ENCODE measurements at regions of chr1 and their contacts with region 1.

Region 1: DNA sequence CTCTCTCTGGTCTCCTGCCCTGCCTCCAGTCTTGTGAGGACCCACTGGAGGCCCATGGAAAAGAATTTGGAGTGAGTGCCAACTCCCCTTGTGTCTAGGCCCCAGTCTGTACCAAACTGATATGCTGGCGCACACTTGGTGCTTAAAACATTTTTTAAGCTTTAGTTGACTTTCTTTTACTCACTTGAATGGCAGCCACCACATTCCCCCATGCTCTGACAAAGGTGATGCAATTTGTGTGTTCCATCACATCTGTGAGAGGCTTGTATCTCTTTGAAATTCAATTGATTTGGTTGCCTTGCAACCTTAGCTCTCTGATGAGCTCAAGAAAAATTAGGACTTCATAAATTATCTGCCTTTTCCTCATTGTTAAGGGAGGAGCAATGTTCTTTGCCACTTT is 30.5 kb upstream of the WDTC1 start:
- DNase-seq: no peak
- ATAC-seq: no peak
- H3K4me3 ChIP-seq: no peak overlapping the region
- H3K4me3 Mint-ChIP-seq: no peak overlapping the region
- H3K27ac ChIP-seq: no peak overlapping the region
- H3K27ac Mint-ChIP-seq: no peak overlapping the region
- H3K4me1 ChIP-seq: no peaks in the 10 kb centered on the region
- H3K4me1 Mint-ChIP-seq: no peaks in the 10 kb centered on the region
- H3K27me3 ChIP-seq: no peaks in the 10 kb centered on the region
- H3K27me3 Mint-ChIP-seq: no peaks in the 10 kb centered on the region
- CTCF ChIP-seq: no peak

Region 2: GRCh38 chr1:27161594-27161993 is 42.4 kb before region 1 on chr1:
- CTCF ChIA-PET with region 1: no interaction called
- POLR2A ChIA-PET with region 1: no interaction called
- intact Hi-C with region 1: no loop called
- DNase-seq: peak in 1 of 9 experiments; percentile 46
- ATAC-seq: peak; percentile 89
- H3K4me3 ChIP-seq: no peak overlapping the region
- H3K4me3 Mint-ChIP-seq: no peak overlapping the region
- H3K27ac ChIP-seq: no peak overlapping the region
- H3K27ac Mint-ChIP-seq: peak overlapping the region; percentile 58
- H3K4me1 ChIP-seq: peaks cover 11% of the 10 kb centered on the region
- H3K4me1 Mint-ChIP-seq: peaks cover 11% of the 10 kb centered on the region
- H3K27me3 ChIP-seq: no peaks in the 10 kb centered on the region
- H3K27me3 Mint-ChIP-seq: no peaks in the 10 kb centered on the region
- CTCF ChIP-seq: no peak

Region 3: GRCh38 chr1:27257155-27257554 is 53.2 kb after region 1 on chr1:
- CTCF ChIA-PET with region 1: interaction called, 13 read pairs
- POLR2A ChIA-PET with region 1: no interaction called
- intact Hi-C with region 1: no loop called
- DNase-seq: no peak
- ATAC-seq: no peak
- H3K4me3 ChIP-seq: no peak overlapping the region
- H3K4me3 Mint-ChIP-seq: no peak overlapping the region
- H3K27ac ChIP-seq: no peak overlapping the region
- H3K27ac Mint-ChIP-seq: no peak overlapping the region
- H3K4me1 ChIP-seq: peaks cover 45% of the 10 kb centered on the region
- H3K4me1 Mint-ChIP-seq: peaks cover 44% of the 10 kb centered on the region
- H3K27me3 ChIP-seq: no peaks in the 10 kb centered on the region
- H3K27me3 Mint-ChIP-seq: no peaks in the 10 kb centered on the region
- CTCF ChIP-seq: no peak

Region 4: DNA sequence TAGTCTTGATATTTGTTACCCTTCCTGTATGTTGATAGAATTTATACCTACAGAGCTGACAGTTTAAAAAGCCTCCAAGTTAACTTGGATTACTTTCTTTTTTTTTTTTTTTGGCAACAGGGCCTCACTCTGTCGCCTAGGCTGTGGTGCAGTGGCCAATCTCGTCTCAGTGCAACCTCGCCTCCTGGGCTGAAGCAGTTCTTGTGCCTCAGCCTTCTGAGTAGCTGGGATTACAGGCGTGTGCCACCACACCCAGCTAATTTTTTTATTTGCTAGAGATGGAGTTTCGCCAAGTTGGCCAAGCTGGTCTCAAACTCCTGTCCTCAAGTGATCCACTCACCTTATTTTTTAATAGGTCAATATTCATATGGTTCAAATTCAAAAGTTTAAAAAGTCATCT is 63.2 kb after region 1 on chr1:
- CTCF ChIA-PET with region 1: interaction called, 13 read pairs
- POLR2A ChIA-PET with region 1: no interaction called
- intact Hi-C with region 1: loop called in 1 of 2 experiments (anchors 5 kb)
- DNase-seq: no peak
- ATAC-seq: no peak
- H3K4me3 ChIP-seq: no peak overlapping the region
- H3K4me3 Mint-ChIP-seq: no peak overlapping the region
- H3K27ac ChIP-seq: no peak overlapping the region
- H3K27ac Mint-ChIP-seq: no peak overlapping the region
- H3K4me1 ChIP-seq: no peaks in the 10 kb centered on the region
- H3K4me1 Mint-ChIP-seq: no peaks in the 10 kb centered on the region
- H3K27me3 ChIP-seq: no peaks in the 10 kb centered on the region
- H3K27me3 Mint-ChIP-seq: no peaks in the 10 kb centered on the region
- CTCF ChIP-seq: no peak

Measured in CD8-positive, alpha-beta T cell (primary cell).